CD4-positive, alpha-beta T cell (primary cell): ENCODE measurements at regions of chr1 and their contacts with region 1.

Region 1: DNA sequence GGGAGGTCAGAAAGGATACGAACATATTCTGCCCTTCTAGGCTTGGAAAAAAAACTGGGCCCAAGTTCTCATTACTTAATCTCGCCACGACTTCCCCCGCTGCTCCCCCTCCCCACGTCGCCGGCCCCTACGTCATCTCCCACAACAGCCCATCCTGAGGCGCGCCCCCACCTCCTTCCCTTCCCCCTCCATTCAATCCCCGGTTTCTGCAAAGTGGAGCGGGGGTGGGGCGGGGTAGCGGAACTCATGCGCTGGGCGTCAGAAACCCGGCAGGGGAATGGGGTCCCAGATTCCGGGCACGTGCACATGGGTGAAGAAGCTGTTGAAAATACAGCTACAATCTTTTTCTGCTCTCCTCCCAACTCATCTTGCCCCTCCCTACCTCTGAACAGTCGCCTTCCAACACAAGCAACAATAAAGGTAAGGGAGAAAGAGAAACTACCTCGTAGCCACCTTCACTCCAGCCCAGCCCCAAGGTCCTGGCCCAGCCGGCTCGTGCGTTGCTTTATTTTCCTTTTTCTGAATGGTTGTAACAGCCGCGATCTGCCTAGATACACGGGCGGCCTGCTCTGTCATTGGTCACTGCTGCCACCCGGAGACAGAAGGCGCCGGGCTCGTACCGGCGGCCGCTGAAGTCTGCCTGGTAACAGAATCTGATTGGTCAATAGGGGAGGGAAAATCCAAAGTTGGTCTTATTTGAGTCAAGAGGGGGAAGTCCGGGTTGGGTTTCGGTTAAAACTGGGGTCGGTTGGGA is at the start of gene RFX5:
- DNase-seq: peak; percentile 85 to 99 (median 90)
- ATAC-seq: peak; percentile 93
- H3K4me3 ChIP-seq: peak within 1 kb of the TSS; percentile 81
- H3K4me3 Mint-ChIP-seq: peak within 1 kb of the TSS; percentile 94
- H3K27ac ChIP-seq: peak within 1 kb of the TSS; percentile 97 to 98
- H3K27ac Mint-ChIP-seq: peak within 1 kb of the TSS; percentile 94
- H3K4me1 ChIP-seq: peaks cover 33% of the 10 kb centered on the region
- H3K4me1 Mint-ChIP-seq: peaks cover 30% of the 10 kb centered on the region
- H3K27me3 ChIP-seq: no peaks in the 10 kb centered on the region
- H3K27me3 Mint-ChIP-seq: no peaks in the 10 kb centered on the region
- CTCF ChIP-seq: no peak
- total RNA-seq, gene RFX5: 62.0 to 65.7 TPM

Region 2: GRCh38 chr1:151198255-151199127 is 148.5 kb before region 1 on chr1 and contains the start of gene PIP5K1A:
- CTCF ChIA-PET with region 1: no interaction called
- POLR2A ChIA-PET with region 1: no interaction called
- intact Hi-C with region 1: loop called in 1 of 2 experiments (anchors 10 kb)
- DNase-seq: peak; percentile 96 to 99 (median 99)
- ATAC-seq: peak; percentile 95
- H3K4me3 ChIP-seq: peak within 1 kb of the TSS; percentile 93
- H3K4me3 Mint-ChIP-seq: peak within 1 kb of the TSS; percentile 98
- H3K27ac ChIP-seq: peak within 1 kb of the TSS; percentile 69 to 77
- H3K27ac Mint-ChIP-seq: peak within 1 kb of the TSS; percentile 96
- H3K4me1 ChIP-seq: peaks cover 43% of the 10 kb centered on the region
- H3K4me1 Mint-ChIP-seq: peaks cover 48% of the 10 kb centered on the region
- H3K27me3 ChIP-seq: no peaks in the 10 kb centered on the region
- H3K27me3 Mint-ChIP-seq: peaks cover 4% of the 10 kb centered on the region
- CTCF ChIP-seq: no peak
- total RNA-seq, gene PIP5K1A: 41.7 to 44.7 TPM

Region 3: DNA sequence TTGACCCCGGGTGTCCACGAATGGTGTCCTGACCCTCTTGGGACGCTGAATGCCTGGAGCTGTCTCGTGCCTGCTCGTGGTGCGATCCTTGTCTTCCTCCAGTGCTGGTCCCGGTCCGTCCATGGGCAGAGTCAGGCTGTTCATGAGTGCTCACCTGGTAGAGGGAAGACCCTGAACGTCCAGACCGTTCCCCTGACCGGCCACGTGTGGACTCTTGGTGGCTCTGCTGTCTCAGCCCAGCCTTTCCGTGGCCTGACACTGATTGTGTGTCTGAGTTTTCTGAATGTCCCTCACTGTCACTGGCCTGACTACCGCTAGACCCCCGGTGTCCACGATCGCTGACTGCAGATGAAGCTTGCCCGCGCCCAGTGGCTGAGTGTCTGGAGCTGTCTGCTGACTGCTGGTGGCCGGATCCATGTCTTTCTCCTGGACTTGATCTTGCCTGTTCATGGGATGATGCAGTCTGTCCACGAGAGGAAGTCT is 966.4 kb after region 1 on chr1:
- CTCF ChIA-PET with region 1: no interaction called
- POLR2A ChIA-PET with region 1: no interaction called
- intact Hi-C with region 1: no loop called
- DNase-seq: peak in 1 of 14 experiments; percentile 4
- ATAC-seq: no peak
- H3K4me3 ChIP-seq: no peak overlapping the region
- H3K4me3 Mint-ChIP-seq: no peak overlapping the region
- H3K27ac ChIP-seq: no peak overlapping the region
- H3K27ac Mint-ChIP-seq: no peak overlapping the region
- H3K4me1 ChIP-seq: no peaks in the 10 kb centered on the region
- H3K4me1 Mint-ChIP-seq: no peaks in the 10 kb centered on the region
- H3K27me3 ChIP-seq: peaks cover 2 to 16% of the 10 kb centered on the region in 2 experiments
- H3K27me3 Mint-ChIP-seq: peaks cover 24% of the 10 kb centered on the region
- CTCF ChIP-seq: no peak